PC-3 (cell line): ENCODE measurements at regions of chr12 and their contacts with region 1.

Region 1: GRCh38 chr12:118016424-118017264 is at the start of gene RFC5:
- DNase-seq: peak; percentile 99
- ATAC-seq: peak; percentile 99
- H3K4me3 ChIP-seq: peak within 1 kb of the TSS; percentile 95
- H3K27ac ChIP-seq: peak within 1 kb of the TSS; percentile 17
- H3K4me1 ChIP-seq: peaks cover 18% of the 10 kb centered on the region
- H3K27me3 ChIP-seq: no peaks in the 10 kb centered on the region
- CTCF ChIP-seq: no peak
- total RNA-seq, gene RFC5: 86.4 and 100 TPM in 2 replicates

Region 2: DNA sequence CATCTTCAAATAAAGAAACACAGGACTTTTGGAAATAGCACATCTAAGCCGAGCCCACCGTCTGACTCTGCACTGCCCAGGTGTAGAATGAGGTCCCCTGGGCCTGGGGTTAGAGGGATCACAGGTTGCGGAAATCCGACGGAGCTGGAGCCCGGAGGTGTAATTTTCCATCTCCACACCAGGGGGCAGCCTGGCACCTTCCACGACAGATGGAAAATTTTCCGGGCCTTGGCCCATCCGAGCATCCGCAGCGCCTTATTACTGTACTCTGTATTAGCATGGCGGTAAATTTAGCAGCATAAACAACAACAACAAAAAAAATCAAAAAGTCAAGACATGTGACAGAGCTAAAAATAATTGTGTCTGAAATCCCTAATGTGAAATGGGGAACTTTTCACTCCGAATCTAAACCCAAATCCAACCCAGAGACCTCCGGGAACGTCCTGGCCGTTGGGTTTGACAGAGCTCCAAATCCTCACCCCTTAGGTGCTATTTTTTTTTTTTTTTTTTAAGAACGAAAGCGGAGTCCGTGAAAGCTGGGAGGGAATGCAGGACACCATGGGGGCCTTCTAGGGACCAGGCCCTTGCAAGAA is 141.7 kb before region 1 on chr12:
- CTCF ChIA-PET with region 1: no interaction called
- POLR2A ChIA-PET with region 1: no interaction called
- intact Hi-C with region 1: loop called (anchors 5 kb)
- DNase-seq: peak; percentile 87
- ATAC-seq: peak; percentile 90
- H3K4me3 ChIP-seq: no peak overlapping the region
- H3K27ac ChIP-seq: no peak overlapping the region
- H3K4me1 ChIP-seq: no peaks in the 10 kb centered on the region
- H3K27me3 ChIP-seq: no peaks in the 10 kb centered on the region
- CTCF ChIP-seq: peak; percentile 94

Region 3: GRCh38 chr12:119102274-119102673 is 1085.6 kb after region 1 on chr12:
- CTCF ChIA-PET with region 1: no interaction called
- POLR2A ChIA-PET with region 1: no interaction called
- intact Hi-C with region 1: no loop called
- DNase-seq: no peak
- ATAC-seq: no peak
- H3K4me3 ChIP-seq: no peak overlapping the region
- H3K27ac ChIP-seq: no peak overlapping the region
- H3K4me1 ChIP-seq: no peaks in the 10 kb centered on the region
- H3K27me3 ChIP-seq: peaks cover 27% of the 10 kb centered on the region; the same call in 1 of the 2 replicates
- CTCF ChIP-seq: no peak